HCT116 (cell line): ENCODE measurements at regions of chr18 and their contacts with region 1.

Region 1: DNA sequence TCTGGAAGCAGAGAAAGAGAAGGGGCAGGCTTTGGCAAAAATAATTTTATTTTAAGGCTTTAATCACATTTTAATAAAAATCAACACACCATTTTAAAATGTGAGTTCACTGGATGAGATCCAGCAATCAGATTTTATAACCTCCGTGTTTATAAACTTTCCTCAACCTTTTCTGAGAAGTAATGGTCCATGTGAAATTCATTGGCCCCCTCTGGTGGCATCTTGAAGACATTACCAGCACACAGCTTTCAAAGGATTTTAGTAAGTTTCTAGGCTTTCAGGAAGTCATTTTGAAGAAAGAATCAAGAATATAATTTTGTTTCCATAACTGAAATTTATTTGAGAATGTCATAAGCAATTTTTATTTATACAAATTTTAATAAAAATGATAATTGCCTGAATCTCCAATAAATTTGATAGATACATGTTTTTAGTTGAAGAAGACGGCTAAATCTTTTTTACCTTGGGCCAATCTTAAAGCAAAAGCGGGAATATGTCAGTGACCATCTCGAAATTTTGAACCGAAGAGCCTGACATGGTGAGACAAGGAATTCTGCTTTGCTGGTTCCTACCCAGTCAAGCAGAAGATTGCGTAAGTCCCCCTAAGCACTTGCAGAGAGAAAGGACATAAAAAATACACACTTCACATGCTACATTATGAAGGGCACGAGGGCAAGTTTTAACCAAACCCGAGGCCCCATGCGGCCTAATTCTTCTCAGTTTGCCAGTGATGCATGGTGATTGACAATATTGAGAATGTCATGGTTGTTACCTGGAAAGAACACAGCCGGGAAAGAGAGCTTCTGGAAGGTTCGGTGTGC is 128.4 kb upstream of the CBLN2 start:
- DNase-seq: no peak
- ATAC-seq: no peak
- H3K4me3 ChIP-seq: no peak overlapping the region
- H3K27ac ChIP-seq: no peak overlapping the region
- H3K4me1 ChIP-seq: no peaks in the 10 kb centered on the region
- H3K27me3 ChIP-seq: no peaks in the 10 kb centered on the region
- CTCF ChIP-seq: peak in 2 of 3 experiments; percentile 44 to 59; a peak in 4 of 6 replicates
- POLR2A ChIP-seq: no peak
- RAD21 ChIP-seq: peak; percentile 39

Region 2: GRCh38 chr18:70781860-70782453 is 1890.6 kb before region 1 on chr18:
- CTCF ChIA-PET with region 1: no interaction called
- POLR2A ChIA-PET with region 1: no interaction called
- RAD21 ChIA-PET with region 1: no interaction called
- intact Hi-C with region 1: loop called (anchors 5 kb)
- DNase-seq: peak; percentile 15
- ATAC-seq: peak; percentile 83
- H3K4me3 ChIP-seq: no peak overlapping the region
- H3K27ac ChIP-seq: no peak overlapping the region
- H3K4me1 ChIP-seq: no peaks in the 10 kb centered on the region
- H3K27me3 ChIP-seq: no peaks in the 10 kb centered on the region
- CTCF ChIP-seq: peak in 2 of 3 experiments; percentile 64 to 73; a peak in 4 of 6 replicates
- POLR2A ChIP-seq: no peak
- RAD21 ChIP-seq: peak; percentile 56

Region 3: GRCh38 chr18:70931942-70932814 is 1740.4 kb before region 1 on chr18:
- CTCF ChIA-PET with region 1: no interaction called
- POLR2A ChIA-PET with region 1: no interaction called
- RAD21 ChIA-PET with region 1: no interaction called
- intact Hi-C with region 1: loop called (anchors 5 kb)
- DNase-seq: no peak
- ATAC-seq: no peak
- H3K4me3 ChIP-seq: no peak overlapping the region
- H3K27ac ChIP-seq: no peak overlapping the region
- H3K4me1 ChIP-seq: no peaks in the 10 kb centered on the region
- H3K27me3 ChIP-seq: no peaks in the 10 kb centered on the region
- CTCF ChIP-seq: peak; percentile 8 to 53 (median 35); a peak in 3 of 6 replicates
- POLR2A ChIP-seq: no peak
- RAD21 ChIP-seq: peak; percentile 27; the same call in 1 of the 2 replicates